H1 (cell line): ENCODE measurements at regions of chr2 and their contacts with region 1.

Region 1: GRCh38 chr2:7405861-7406715 is 488.9 kb downstream of the RNF144A start:
- DNase-seq: no peak
- H3K4me3 ChIP-seq: no peak overlapping the region
- H3K27ac ChIP-seq: no peak overlapping the region
- H3K4me1 ChIP-seq: no peaks in the 10 kb centered on the region; a peak in 1 of 7 replicates
- H3K27me3 ChIP-seq: no peaks in the 10 kb centered on the region
- CTCF ChIP-seq: no peak
- EP300 ChIP-seq: no peak
- POLR2A ChIP-seq: no peak
- RAD21 ChIP-seq: no peak

Region 2: GRCh38 chr2:7309582-7309981 is 96.5 kb before region 1 on chr2:
- CTCF ChIA-PET with region 1: no interaction called
- POLR2A ChIA-PET with region 1: no interaction called
- DNase-seq: no peak
- H3K4me3 ChIP-seq: no peak overlapping the region
- H3K27ac ChIP-seq: no peak overlapping the region
- H3K4me1 ChIP-seq: no peaks in the 10 kb centered on the region; a peak in 1 of 7 replicates
- H3K27me3 ChIP-seq: no peaks in the 10 kb centered on the region
- CTCF ChIP-seq: no peak
- EP300 ChIP-seq: no peak
- POLR2A ChIP-seq: no peak
- RAD21 ChIP-seq: no peak

Region 3: DNA sequence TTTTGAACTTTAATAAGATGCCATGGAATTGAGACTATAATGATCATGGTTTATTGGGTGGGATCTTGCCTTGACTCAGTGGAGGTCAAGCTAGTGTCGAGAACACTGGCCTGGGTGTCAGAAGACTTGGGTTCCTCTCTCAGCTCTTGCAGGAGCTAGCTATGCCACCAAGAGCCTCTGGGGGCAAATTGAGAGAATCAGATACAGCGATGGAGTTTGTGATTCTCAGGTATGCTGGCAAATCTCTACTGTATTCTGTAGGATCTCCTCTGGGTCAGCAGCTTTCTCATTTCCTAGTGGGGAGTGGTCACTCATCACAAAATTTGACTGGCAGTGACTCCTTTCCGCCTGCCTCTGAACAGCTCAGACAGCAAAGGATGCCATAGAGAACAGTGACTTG is 11.9 kb before region 1 on chr2:
- CTCF ChIA-PET with region 1: interaction called, 16 read pairs
- POLR2A ChIA-PET with region 1: no interaction called
- DNase-seq: no peak
- H3K4me3 ChIP-seq: no peak overlapping the region
- H3K27ac ChIP-seq: no peak overlapping the region
- H3K4me1 ChIP-seq: peaks cover 0 to 2% (median 0%) of the 10 kb centered on the region in 4 experiments; a peak in 1 of 7 replicates
- H3K27me3 ChIP-seq: no peaks in the 10 kb centered on the region
- CTCF ChIP-seq: peak in 2 of 3 experiments; percentile 36 to 43; a peak in 3 of 4 replicates
- EP300 ChIP-seq: no peak
- POLR2A ChIP-seq: no peak
- RAD21 ChIP-seq: peak; percentile 28 to 35; a peak in 2 of 4 replicates